ENCODE measurements at regions of chr7 and their contacts with region 1.

Region 1: DNA sequence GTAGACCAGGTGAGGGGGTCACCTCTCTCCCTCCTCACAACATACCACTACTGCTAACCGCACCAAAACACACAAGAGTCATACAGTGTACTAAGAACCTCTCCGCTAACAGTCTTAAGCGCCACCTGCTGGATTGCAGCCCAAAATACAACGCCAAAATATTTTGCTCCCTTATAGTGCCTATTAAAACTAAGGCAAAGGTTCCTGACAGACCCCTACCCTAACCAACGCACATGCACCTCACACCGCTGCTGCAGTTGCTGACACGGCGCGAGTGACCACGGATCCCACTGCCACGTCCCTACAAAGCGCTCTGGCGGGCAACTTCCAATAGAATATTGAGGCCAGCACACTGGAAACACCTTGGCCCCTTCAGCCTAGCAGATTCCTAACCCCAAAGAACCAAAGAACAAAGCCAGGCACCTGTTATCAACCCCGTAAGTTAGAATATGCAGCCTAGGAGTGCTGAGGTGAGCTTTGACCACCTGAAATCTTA is 563.6 kb upstream of the SEMA3D start:
- H3K4me3 Mint-ChIP-seq: no peak overlapping the region
- H3K27ac Mint-ChIP-seq: no peak overlapping the region
- H3K4me1 Mint-ChIP-seq: no peaks in the 10 kb centered on the region
- H3K27me3 Mint-ChIP-seq: no peaks in the 10 kb centered on the region

Region 2: GRCh38 chr7:85191383-85191782 is 559.1 kb before region 1 on chr7:
- intact Hi-C with region 1: loop called (anchors 10 kb)
- H3K4me3 Mint-ChIP-seq: no peak overlapping the region
- H3K27ac Mint-ChIP-seq: no peak overlapping the region
- H3K4me1 Mint-ChIP-seq: peaks cover 10% of the 10 kb centered on the region
- H3K27me3 Mint-ChIP-seq: peaks cover 21% of the 10 kb centered on the region

Region 3: DNA sequence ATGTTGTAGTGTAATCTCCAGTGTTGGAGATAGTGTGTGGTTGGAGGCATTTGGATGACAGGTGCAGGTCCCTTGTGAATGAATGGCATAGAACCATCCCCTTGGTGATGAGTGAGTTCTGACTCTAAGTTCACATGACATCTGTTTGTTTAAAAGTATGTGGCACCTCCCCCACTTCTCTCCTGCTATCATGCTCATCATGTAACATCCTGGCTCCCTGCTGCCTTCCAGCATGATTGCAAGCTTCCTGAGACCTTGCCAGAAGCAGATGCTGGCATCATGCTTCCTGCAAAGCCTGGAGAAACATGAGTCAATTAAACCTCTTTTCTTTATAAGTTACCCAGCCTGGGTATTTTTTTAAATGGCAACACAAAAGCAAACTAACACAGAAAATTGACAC is 64.6 kb before region 1 on chr7:
- intact Hi-C with region 1: no loop called
- H3K4me3 Mint-ChIP-seq: no peak overlapping the region
- H3K27ac Mint-ChIP-seq: no peak overlapping the region
- H3K4me1 Mint-ChIP-seq: no peaks in the 10 kb centered on the region
- H3K27me3 Mint-ChIP-seq: no peaks in the 10 kb centered on the region

Region 4: DNA sequence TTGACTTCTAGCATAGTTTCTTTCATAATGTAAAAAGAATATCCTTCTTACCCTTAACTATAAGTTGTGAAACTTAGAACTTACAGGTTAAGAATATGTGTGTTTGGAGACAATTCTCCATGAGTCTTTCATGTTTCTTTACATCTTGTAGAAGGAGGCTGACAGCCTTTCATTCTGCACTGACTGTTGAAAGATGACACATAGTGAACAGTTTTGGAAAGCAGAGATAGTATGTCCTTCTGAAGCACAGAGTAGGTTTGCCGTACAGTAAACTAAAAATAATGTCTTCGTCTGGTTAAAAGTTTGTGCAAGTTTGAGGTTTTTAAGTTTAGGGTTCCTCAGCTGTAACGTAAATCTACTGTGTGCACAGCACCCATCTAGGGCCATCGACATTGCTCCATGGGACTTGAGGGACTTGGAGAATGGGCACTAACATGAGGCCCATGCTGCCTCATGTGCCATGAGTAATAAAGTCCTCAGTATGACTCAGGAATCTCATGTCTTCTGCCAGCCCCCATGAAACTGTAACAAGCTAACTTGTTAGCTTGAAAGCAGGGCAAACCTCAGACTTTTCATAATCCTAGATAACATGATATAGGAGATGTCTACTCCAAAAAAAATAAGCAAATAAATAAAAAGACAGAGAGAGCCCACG is 1333.5 kb after region 1 on chr7:
- intact Hi-C with region 1: no loop called
- H3K4me3 Mint-ChIP-seq: no peak overlapping the region
- H3K27ac Mint-ChIP-seq: no peak overlapping the region
- H3K4me1 Mint-ChIP-seq: no peaks in the 10 kb centered on the region
- H3K27me3 Mint-ChIP-seq: no peaks in the 10 kb centered on the region